ENCODE measurements at regions of chr1 and their contacts with region 1.

Region 1: GRCh38 chr1:54070171-54070837 is 16.9 kb downstream of the TCEANC2 start:
- DNase-seq: no peak
- H3K4me3 ChIP-seq: no peak overlapping the region
- H3K27ac ChIP-seq: no peak overlapping the region
- H3K4me1 ChIP-seq: no peaks in the 10 kb centered on the region
- H3K27me3 ChIP-seq: no peaks in the 10 kb centered on the region
- CTCF ChIP-seq: peak; percentile 65

Region 2: DNA sequence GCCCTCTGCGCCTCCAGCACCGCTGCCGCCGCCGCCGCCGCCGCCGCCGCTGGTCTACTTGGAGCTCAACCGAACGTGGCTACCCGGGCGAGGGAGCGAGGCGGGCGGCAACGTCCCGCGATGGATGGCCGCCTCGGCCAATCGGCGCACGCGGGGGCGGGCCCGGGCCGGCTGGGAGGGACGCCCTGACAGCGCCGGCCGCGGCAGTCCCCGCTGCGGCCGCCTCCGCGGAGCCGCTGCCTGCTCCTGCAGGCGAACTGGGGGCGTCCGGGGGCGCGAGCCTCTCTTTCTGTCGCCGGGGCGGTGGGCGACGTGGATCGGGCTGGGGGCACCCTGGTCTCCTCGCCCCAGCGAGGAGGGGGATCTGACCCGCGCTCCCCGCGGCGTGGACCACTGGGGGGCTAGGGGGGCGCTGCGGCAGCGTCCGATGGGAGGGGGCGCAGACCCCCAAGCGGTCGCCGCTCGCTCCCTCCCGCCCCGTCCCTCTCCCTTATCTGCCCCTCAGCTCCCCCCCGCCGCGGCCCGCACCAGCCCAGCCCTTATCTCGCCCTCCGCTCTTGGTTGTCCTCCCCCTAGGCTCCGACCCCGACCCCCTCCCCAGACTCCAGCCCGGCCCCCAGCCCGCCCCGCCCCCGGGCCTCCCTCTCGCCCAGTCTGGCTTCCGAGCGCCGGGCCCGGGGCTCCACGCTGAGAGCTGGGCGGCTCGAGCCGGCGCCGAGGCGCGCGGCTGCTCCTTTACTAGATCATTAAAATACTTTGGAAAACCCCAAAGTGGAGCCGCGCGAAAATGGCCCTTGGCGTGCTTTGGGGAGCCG is 336.2 kb after region 1 on chr1 and contains the start of gene SSBP3:
- intact Hi-C with region 1: loop called (anchors 10 kb)
- DNase-seq: peak; percentile 90
- H3K4me3 ChIP-seq: peak within 1 kb of the TSS; percentile 92
- H3K27ac ChIP-seq: peak within 1 kb of the TSS; percentile 93
- H3K4me1 ChIP-seq: peaks cover 17% of the 10 kb centered on the region
- H3K27me3 ChIP-seq: no peaks in the 10 kb centered on the region
- CTCF ChIP-seq: no peak
- total RNA-seq, gene SSBP3: 63.8 to 76.5 TPM

Region 3: DNA sequence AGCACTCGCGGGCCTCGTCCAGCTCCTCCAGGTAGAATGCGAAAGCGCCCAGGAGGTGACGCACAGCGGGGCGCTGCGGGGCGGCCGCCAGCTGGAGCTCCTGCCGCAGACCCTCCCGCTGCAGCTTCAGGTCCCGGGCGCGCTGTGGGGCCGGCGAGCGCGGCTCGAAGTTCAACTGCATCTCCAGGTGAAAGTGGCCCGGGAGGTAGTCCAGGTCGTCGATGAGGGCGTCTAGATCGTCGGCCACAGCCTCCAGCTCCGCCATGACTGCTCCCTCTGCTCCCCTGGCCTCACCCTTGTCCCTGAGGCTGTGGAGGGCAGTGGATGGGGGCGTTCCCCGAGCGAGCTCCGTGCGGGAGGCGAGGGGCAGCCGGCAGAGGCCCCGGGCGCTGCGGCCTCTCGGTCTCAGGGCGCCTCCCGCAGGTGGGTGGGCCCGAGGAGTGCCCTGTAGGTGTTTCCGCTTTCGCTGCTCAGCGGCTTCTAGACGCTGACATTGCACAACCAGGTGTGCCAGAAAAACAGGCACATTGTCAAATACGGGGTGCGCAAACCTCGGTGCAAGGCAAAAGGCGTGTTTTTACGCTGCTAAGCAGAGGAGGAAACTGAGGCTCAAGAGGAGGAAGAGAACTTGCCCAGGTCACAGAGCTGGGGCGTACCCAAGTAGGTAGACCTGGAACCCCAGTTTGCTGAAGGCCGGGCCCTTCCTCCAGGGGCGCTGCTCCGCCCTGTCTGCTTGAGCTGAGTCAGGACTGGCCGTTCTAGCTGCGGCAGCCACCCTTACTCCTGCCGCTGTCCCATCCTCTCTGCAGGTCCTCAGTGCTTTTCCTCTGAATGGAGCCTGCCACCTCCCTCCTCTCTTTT is 730.8 kb after region 1 on chr1 and contains the start of gene TTC22:
- intact Hi-C with region 1: loop called (anchors 10 kb)
- DNase-seq: peak; percentile 89
- H3K4me3 ChIP-seq: peak within 1 kb of the TSS; percentile 67
- H3K27ac ChIP-seq: peak within 1 kb of the TSS; percentile 87
- H3K4me1 ChIP-seq: peaks cover 28% of the 10 kb centered on the region
- H3K27me3 ChIP-seq: no peaks in the 10 kb centered on the region
- CTCF ChIP-seq: peak; percentile 57
- total RNA-seq, gene TTC22: 52.4 to 80.6 TPM